Dorsolateral prefrontal cortex (tissue), 120 donors: ENCODE measurements at regions of chr10 and their contacts with region 1.

Region 1: GRCh38 chr10:124530215-124530665 is 68.6 kb downstream of the LHPP start:
- DNase-seq: peak; percentile 85 to 92 (median 89)
- H3K4me3 ChIP-seq: peak overlapping the region in 9 of 59 donors; percentile 5 to 39 (median 28)
- H3K27ac ChIP-seq: peak overlapping the region in 14 of 59 donors; percentile 7 to 71 (median 42)
- H3K27me3 ChIP-seq: no peaks in the 10 kb centered on the region
- CTCF ChIP-seq: peak; percentile 23 to 95 (median 86)

Region 2: DNA sequence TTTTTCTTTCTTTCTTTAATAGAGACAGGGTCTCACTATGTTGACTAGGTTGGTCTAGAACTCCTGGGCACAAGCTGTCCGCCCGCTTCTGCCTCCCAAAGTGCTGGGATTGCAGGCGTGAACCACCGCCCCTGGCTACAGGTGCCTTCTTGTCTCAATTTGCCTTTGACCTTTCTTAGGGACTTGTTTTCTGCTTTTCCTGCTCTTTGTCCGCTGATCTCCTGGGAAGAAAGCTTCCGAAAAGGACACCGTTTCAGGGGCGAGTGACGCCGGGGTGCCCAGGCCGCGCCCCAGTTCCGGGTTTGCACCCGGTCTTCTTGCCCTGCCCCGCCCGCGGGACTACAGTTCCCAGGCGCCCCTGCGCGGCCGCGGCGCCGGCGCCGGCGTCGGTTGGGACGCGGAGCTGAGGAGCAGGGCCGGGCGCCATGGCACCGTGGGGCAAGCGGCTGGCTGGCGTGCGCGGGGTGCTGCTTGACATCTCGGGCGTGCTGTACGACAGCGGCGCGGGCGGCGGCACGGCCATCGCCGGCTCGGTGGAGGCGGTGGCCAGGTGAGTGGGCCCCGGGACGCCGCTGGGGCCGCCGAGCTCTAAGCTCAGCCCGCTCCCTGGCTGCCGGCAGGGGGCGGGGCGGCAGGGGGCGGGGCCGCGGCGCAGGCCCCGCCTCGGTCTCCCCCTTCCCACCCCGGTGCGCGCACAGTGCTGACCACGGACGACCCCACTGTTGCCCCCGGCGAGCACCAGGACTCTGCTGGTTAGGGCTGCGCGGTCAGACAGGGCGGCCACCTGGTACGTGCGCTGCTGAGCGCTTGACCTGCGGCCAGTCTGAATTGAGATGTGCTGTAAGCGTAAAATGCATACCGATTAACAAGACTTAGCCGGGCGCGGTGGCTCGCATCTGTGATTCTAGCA is 68.5 kb before region 1 on chr10 and contains the start of gene LHPP:
- intact Hi-C with region 1: loop called in 1 of 2 experiments (anchors 5 kb)
- DNase-seq: peak; percentile 76 to 95 (median 84)
- H3K4me3 ChIP-seq: peak within 1 kb of the TSS; percentile 63 to 98 (median 81)
- H3K27ac ChIP-seq: peak within 1 kb of the TSS; percentile 53 to 96 (median 89)
- H3K27me3 ChIP-seq: no peaks in the 10 kb centered on the region
- CTCF ChIP-seq: peak in 51 of 56 donors; percentile 10 to 89 (median 64)
- total RNA-seq, gene LHPP: 62.4 to 585 (median 134) TPM

Region 3: GRCh38 chr10:124802313-124802675 is 272.1 kb after region 1 on chr10:
- intact Hi-C with region 1: loop called in 1 of 2 experiments (anchors 10 kb)
- DNase-seq: no peak
- H3K4me3 ChIP-seq: peak overlapping the region; percentile 59 to 100 (median 96)
- H3K27ac ChIP-seq: peak overlapping the region in 47 of 59 donors; percentile 59 to 96 (median 86)
- H3K27me3 ChIP-seq: no peaks in the 10 kb centered on the region
- CTCF ChIP-seq: no peak

Region 4: GRCh38 chr10:124827474-124827873 is 297.2 kb after region 1 on chr10:
- intact Hi-C with region 1: loop called (anchors 5 kb)
- DNase-seq: no peak
- H3K4me3 ChIP-seq: no peak overlapping the region
- H3K27ac ChIP-seq: no peak overlapping the region
- H3K27me3 ChIP-seq: no peaks in the 10 kb centered on the region
- CTCF ChIP-seq: peak; percentile 49 to 79 (median 66)